ENCODE measurements at regions of chr18 and their contacts with region 1.

Region 1: DNA sequence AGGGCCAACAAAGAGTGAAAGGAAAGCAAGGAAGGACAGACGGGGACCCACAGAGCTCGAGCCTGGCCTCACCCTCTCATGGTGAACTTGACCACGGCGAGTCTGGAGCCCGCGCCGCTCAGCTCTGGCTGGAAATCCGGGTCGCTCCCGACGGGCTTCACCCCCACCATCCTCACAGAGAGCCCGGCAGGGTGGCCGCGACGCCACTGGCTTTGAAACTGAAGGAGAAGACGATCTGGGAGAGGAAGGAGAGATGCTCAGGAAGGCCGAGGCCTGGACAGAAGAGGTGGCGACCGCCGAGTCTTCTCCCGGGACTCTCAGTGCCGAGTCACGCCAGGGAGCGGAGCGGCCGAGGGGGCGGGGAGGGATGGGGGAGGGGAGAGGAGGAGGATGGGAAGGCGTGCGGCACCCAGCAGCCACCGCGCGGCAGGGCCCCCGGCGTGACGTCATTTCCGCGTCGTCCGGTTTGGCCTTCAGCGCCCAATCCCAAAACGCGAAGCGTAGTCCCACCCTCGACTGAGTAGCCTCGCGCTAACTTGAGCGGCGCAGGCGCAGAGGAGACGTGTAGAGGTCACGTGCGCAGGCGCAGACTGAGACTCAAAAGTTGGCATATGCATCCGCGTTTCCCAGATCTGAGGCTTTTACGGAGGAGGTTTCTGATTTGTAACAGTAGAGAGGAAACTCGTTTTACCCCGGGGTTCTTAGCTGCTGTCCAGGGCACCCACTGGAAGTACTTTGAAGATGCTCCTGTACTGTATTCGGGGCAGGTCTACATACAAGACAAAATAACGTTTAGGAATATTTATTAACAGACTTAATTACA is at the start of gene TXNL1:
- DNase-seq: peak; percentile 100
- ATAC-seq: peak; percentile 99
- H3K4me3 ChIP-seq: peak within 1 kb of the TSS; percentile 70 to 98 (median 87)
- H3K27ac ChIP-seq: peak within 1 kb of the TSS; percentile 89 to 99 (median 96)
- H3K4me1 ChIP-seq: peaks cover 0 to 45% (median 29%) of the 10 kb centered on the region in 12 donors
- H3K27me3 ChIP-seq: no peaks in the 10 kb centered on the region
- CTCF ChIP-seq: no peak
- POLR2A ChIP-seq: peak in 1 of 2 donors; percentile 61
- total RNA-seq, gene TXNL1: 68.0 to 100 (median 86.9) TPM

Region 2: DNA sequence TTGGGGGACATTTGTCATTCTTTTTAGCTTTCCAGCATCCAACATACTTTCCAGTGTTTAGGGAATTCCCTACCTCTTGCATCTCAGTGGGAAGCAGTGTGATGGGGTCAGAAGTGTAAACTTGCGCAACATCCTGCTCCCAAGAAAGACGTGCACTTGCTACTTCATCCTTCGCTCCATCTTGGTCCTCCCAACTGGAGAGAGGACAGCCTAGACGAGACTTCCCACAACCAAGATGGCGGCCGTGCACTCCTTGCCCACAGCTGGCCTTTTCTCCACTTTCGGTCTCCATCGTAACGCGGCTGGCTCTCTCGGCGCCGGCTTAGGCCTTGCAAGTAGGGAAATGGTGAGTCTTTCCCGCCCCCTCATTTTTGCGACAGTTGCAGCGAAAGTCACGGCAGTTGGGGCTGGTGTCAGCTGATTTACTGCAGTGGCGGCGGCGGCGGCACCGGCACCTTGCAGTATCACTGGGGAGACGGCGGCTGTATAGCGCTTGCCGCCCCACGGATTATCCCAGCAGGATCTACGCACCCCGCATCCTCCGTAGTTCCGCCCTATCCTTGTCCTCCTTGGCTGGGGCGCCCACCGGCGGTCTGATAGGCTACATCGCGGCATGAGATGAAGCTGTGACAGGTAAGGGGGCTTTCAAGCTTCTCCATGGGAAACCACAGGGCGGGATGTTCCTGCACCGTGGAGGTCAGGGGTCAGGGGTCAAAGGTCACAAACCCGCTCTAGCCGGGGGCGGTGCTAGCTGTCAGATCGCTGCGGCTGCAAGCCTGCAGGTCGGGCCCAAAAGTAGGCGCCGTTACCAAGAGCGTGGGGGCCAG is 12.7 kb after region 1 on chr18 and contains the start of gene WDR7:
- intact Hi-C with region 1: loop called in 1 of 10 experiments (anchors 1 kb)
- DNase-seq: peak; percentile 96 to 99 (median 98)
- ATAC-seq: peak; percentile 99
- H3K4me3 ChIP-seq: peak within 1 kb of the TSS; percentile 52 to 98 (median 87)
- H3K27ac ChIP-seq: peak within 1 kb of the TSS in 11 of 12 donors; percentile 71 to 95 (median 84)
- H3K4me1 ChIP-seq: peaks cover 0 to 42% (median 13%) of the 10 kb centered on the region in 12 donors
- H3K27me3 ChIP-seq: no peaks in the 10 kb centered on the region
- CTCF ChIP-seq: peak in 3 of 12 donors; percentile 12 to 29 (median 29)
- POLR2A ChIP-seq: peak in 1 of 2 donors; percentile 58
- total RNA-seq, gene WDR7: 16.3 to 33.6 (median 28.4) TPM

Region 3: GRCh38 chr18:56696966-56697365 is 58.5 kb after region 1 on chr18:
- intact Hi-C with region 1: loop called in 1 of 10 experiments (anchors 10 kb)
- DNase-seq: no peak
- ATAC-seq: no peak
- H3K4me3 ChIP-seq: no peak overlapping the region
- H3K27ac ChIP-seq: no peak overlapping the region
- H3K4me1 ChIP-seq: no peaks in the 10 kb centered on the region
- H3K27me3 ChIP-seq: no peaks in the 10 kb centered on the region
- CTCF ChIP-seq: no peak
- POLR2A ChIP-seq: no peak